ENCODE measurements at regions of chr18 and their contacts with region 1.

Region 1: DNA sequence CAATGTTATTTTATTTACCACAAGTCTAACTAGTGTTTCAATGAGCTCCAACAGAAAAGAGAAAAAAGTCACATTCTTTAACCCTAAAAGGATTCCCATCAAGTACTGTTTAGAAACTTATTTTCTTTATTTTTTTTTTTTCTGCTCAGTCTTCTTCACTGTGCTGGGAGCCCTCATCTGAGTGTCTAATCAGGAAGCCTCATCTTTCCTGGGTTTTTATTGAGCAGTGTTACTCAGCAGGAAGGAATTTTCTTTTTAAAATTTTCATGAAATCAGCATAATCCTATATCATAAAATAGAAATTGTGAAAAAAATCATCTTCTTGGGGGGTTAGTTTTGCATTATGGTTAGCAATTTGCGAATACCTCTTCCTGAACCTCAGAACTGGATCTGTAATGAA is 453.8 kb downstream of the CDH2 start:
- DNase-seq: no peak

Region 2: GRCh38 chr18:27661320-27662018 is 61.7 kb before region 1 on chr18:
- intact Hi-C with region 1: loop called (anchors 10 kb)
- DNase-seq: no peak

Region 3: DNA sequence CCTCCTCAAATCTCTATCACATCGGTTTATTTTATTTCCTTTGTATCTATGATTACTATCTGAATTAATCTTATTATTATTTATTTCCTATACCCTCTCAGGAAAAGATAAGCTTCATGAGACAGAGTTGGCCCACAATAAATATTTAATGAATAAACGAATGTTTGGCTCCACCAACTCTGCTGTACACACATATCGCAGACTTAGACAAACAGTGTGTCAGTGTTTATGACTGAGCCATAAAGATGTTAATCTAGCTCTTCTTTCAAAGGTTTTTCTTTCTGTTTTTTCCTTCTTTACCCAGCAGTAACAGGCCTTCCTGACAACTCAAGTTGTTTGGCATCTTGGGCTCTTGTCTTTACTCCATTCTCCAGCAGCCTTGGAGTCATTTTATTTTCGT is 124.2 kb after region 1 on chr18:
- intact Hi-C with region 1: no loop called
- DNase-seq: no peak